Sciatic nerve (tissue), 2 donors: ENCODE measurements at regions of chr1 and their contacts with region 1.

Region 1: DNA sequence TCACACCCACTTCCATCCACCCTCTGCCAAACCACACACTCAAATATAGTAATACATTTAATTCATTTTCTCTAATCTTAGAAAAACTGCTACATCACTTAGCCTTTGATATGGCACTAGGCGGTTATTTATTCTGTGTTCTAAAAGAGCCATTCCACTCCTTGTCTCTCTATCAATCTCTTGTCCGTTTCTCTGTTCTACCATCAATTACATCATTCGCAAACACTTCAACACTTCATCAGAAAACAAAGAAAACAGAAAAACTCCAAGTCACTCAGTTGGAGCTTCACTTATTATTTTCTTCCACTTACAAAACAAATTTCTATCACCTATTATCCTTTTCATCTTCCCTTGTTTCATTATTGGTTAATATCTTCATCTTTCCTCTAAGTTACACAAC is 1523.0 kb downstream of the KCNT2 start:
- DNase-seq: no peak
- ATAC-seq: no peak

Region 2: DNA sequence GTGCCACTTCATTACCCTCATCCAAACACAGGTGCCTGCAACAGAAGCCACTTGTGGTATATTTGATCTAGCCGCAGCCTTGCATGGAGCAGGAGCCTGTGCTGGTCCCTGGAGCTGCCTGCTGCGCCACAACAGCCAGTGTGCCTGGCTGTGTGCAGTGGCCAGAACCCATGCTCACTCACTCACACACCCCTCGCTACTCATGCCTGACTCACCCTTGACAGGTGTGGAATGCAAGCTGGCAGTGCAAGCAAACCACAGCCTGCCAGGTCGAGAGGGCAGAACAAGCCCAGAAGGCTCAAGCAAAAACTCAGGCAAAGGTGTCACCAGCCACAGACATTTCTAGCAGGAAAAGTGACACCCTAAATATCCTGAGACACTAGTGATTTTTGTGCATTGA is 12.1 kb after region 1 on chr1:
- intact Hi-C with region 1: loop called (anchors 1 kb)
- DNase-seq: no peak
- ATAC-seq: no peak